Ascending aorta (tissue), 2 donors: ENCODE measurements at regions of chr3 and their contacts with region 1.

Region 1: DNA sequence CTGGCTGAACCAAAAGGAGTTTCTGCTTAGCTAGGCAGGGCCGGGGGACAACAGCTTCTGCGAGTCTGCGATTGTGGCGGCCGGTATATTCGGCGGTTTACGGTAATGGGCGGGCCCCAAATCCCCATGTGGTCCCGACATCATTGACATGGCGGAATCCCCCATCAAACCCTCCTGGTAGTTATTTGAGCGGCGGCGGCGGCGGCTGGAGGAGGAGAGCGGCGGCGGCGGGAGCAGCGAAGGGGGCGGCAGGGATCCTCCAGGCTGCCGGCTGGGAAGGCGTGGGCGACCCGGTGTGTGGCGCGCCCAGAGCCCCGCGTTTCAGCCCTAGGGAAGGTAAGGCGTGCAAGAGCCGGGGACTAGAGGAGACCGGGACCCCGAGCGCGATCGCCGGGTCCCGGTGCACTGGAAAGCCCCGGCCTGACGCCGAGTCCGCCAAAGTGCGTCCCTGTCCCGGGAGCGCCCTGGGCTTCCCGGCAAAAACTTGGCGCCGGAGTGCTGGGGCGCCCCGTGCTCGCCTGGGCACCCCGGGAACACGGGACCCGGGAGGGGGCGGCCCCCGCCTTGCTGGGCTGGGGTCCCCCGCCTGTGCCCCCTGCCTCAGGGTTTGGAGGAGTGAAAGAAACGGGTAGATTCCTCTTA is at the start of gene FNDC3B:
- DNase-seq: peak; percentile 80 to 96
- H3K4me3 ChIP-seq: peak within 1 kb of the TSS; percentile 85 to 94
- H3K27ac ChIP-seq: peak within 1 kb of the TSS; percentile 99 to 100
- H3K4me1 ChIP-seq: peaks cover 5 to 18% of the 10 kb centered on the region in 2 donors
- H3K27me3 ChIP-seq: no peaks in the 10 kb centered on the region
- CTCF ChIP-seq: no peak
- total RNA-seq, gene FNDC3B: 54.9 TPM

Region 2: GRCh38 chr3:171809821-171810628 is 229.5 kb before region 1 on chr3 and contains the start of gene PLD1:
- intact Hi-C with region 1: loop called (anchors 2 kb)
- DNase-seq: peak; percentile 46 to 95
- H3K4me3 ChIP-seq: peak within 1 kb of the TSS; percentile 69 to 91
- H3K27ac ChIP-seq: peak within 1 kb of the TSS; percentile 82 to 93
- H3K4me1 ChIP-seq: peaks cover 5 to 7% of the 10 kb centered on the region in 2 donors
- H3K27me3 ChIP-seq: no peaks in the 10 kb centered on the region
- CTCF ChIP-seq: peak in 1 of 3 experiments; percentile 16
- total RNA-seq, gene PLD1: 8.8 TPM

Region 3: DNA sequence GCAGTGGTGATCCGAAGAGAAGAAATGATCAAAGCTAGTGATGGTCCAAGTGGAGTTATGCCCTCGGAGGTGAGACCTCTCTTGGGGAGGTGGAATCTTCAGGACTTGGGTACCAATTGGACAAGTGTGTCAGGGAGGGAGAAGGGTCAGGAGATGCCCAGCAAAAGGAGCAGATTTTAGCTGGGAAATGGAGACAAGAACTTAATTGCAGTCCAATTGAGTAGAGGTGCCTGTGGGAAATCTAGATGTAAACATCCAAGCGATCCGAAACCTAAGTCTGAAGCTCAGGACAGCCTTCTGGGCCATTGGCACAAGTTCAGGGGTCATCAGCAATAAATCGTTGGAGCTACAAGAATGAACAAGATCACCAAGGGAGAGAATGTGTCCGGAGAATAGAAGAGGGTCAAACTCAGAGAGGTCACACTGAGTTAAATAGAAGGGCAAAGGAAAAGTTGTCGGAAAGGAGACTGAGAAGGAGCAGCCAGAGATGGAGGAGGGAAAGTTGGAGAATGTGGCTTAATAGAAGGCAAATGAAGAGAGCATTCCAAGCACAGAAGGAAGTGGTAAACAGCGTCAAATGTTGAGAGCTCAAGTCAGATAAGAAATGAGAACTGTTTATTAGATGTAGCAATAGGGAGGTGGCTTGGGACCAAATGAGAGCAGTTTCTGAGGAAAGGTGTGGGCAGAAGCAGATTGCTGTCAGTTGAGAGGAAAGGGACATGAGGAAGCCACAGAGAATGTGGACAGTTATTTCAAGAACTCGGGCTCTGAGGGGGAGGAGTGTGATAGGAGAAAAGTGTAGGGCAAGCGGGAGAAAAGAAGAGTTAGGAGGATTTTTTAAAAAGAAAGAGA is 64.3 kb before region 1 on chr3:
- intact Hi-C with region 1: loop called (anchors 5 kb)
- DNase-seq: no peak
- H3K4me3 ChIP-seq: no peak overlapping the region
- H3K27ac ChIP-seq: no peak overlapping the region
- H3K4me1 ChIP-seq: peaks cover 0 to 3% of the 10 kb centered on the region in 2 donors
- H3K27me3 ChIP-seq: no peaks in the 10 kb centered on the region
- CTCF ChIP-seq: no peak

Region 4: GRCh38 chr3:172065967-172066762 is 26.6 kb after region 1 on chr3:
- intact Hi-C with region 1: no loop called
- DNase-seq: no peak
- H3K4me3 ChIP-seq: no peak overlapping the region
- H3K27ac ChIP-seq: peak overlapping the region in 1 of 2 donors; percentile 20
- H3K4me1 ChIP-seq: peaks cover 16 to 67% of the 10 kb centered on the region in 2 donors
- H3K27me3 ChIP-seq: no peaks in the 10 kb centered on the region
- CTCF ChIP-seq: no peak

Region 5: GRCh38 chr3:172082269-172082668 is 42.7 kb after region 1 on chr3:
- intact Hi-C with region 1: loop called (anchors 5 kb)
- DNase-seq: peak in 1 of 2 donors; percentile 71
- H3K4me3 ChIP-seq: no peak overlapping the region
- H3K27ac ChIP-seq: peak overlapping the region; percentile 54 to 59
- H3K4me1 ChIP-seq: peaks cover 0 to 18% of the 10 kb centered on the region in 2 donors
- H3K27me3 ChIP-seq: no peaks in the 10 kb centered on the region
- CTCF ChIP-seq: no peak

Region 6: DNA sequence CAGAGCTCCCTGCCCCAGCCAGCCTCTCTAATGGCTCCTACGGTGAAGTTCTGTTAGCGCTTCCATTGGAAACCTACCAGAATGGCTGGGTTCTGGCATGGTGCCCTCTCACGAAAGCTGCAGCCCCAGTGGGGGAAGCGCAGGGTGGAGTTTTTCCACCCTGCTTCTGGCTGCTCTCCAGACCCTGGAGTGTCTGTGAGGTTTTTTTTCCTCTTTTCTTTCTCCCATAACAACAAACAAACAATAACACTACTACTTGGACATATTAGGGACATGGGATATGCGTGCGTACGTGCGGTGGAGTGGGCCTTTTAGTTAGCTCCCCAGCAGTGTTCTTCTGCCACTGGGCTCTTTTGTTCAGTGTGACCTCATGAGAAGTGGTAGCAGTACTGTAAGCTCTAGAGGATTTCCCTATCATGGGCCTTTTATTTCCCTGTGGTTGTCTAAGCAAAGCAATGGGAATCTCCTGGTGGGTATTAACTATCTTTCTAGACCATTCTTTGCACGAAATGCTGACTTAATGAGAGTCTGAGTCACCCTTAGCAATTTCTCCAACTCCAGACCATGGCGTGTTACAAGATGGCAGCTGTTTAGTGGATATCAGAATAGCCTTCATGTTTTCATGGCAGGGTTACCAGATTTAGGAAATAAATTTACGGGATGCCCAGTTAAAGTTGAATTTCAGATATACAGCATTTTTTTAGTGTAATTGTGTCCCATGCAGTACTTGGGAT is 161.7 kb after region 1 on chr3:
- intact Hi-C with region 1: loop called (anchors 2 kb)
- DNase-seq: peak; percentile 12 to 72
- H3K4me3 ChIP-seq: no peak overlapping the region
- H3K27ac ChIP-seq: peak overlapping the region; percentile 75 to 88
- H3K4me1 ChIP-seq: peaks cover 11 to 46% of the 10 kb centered on the region in 2 donors
- H3K27me3 ChIP-seq: no peaks in the 10 kb centered on the region
- CTCF ChIP-seq: no peak

Region 7: DNA sequence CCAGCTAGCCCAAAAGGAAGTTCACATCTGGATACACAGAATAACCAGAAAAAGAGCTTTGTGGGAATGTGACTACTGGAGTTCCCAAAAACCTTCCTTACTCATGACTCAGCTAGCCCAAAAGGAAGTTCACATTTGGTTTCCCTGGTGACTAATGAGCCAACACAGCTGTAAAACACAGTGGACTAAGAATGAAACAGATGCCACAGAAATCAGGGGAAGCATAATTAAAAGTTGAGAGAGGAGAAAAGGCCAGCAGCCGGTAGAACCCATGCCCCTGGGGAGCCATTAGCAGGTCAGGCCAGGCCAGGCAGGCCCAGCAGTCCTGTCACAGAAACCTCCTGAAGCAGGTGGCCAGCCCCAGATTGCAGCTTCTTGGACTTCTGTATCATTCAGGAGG is 278.4 kb after region 1 on chr3:
- intact Hi-C with region 1: loop called (anchors 5 kb)
- DNase-seq: peak in 1 of 2 donors; percentile 82
- H3K4me3 ChIP-seq: no peak overlapping the region
- H3K27ac ChIP-seq: peak overlapping the region; percentile 80 to 84
- H3K4me1 ChIP-seq: peaks cover 4 to 72% of the 10 kb centered on the region in 2 donors
- H3K27me3 ChIP-seq: no peaks in the 10 kb centered on the region
- CTCF ChIP-seq: no peak